Astrocyte of the cerebellum (primary cell): ENCODE measurements at regions of chr2 and their contacts with region 1.

Region 1: GRCh38 chr2:186503848-186504606 is 18.0 kb downstream of the ZC3H15 start:
- DNase-seq: peak; percentile 18
- H3K4me3 ChIP-seq: no peak overlapping the region
- CTCF ChIP-seq: peak; percentile 6

Region 2: GRCh38 chr2:186442885-186443284 is 61.1 kb before region 1 on chr2:
- in situ Hi-C with region 1: no loop called
- DNase-seq: no peak
- H3K4me3 ChIP-seq: no peak overlapping the region
- CTCF ChIP-seq: no peak

Region 3: GRCh38 chr2:186641807-186642321 is 137.8 kb after region 1 on chr2:
- in situ Hi-C with region 1: loop called (anchors 25 kb)
- DNase-seq: peak; percentile 75
- H3K4me3 ChIP-seq: no peak overlapping the region
- CTCF ChIP-seq: peak; percentile 78